Ascending aorta (tissue), 2 donors: ENCODE measurements at regions of chr16 and their contacts with region 1.

Region 1: DNA sequence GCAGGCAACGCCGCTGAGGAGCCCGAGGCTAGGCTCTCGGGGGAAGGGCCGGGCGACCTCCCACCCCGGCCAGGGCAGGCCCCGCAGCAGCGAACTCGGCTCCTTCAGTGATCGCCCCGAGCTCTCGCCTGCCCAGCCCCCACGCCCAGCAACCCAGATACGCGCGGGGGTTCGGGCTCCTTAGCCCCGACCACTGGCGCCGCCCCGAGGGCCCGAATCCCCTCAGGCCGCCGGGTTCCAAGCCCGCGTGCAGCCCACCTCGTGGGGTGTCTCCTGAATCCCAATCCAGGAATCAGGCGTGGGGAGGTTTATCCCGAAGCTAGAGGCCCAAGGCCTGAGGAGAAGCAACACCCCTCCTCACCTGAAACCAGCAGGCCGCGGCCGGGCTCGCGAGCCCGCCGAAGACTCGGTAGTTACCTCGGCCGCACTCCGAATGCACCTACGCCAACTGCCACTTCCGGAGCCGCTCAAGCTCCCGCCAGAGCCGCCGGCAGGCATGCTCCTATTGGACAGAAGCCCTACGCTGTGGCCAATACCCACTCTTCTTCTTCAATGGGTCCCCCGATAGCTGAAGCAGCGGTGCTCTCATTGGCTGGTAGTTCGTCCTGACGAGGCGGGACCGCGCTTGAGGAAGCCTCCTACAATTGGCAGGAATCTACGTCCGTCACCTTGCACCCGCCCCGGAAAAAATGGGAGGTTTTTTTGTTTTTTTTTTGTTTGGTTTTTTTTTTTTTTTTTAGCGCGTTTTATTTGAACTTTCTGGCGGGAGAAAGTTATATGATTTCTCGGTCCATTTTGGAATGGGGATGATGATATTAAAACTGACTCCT is at the start of gene RFWD3:
- DNase-seq: peak; percentile 91 to 99
- H3K4me3 ChIP-seq: peak within 1 kb of the TSS; percentile 78 to 94
- H3K27ac ChIP-seq: peak within 1 kb of the TSS; percentile 13 to 77
- H3K4me1 ChIP-seq: peaks cover 0 to 6% of the 10 kb centered on the region in 2 donors
- H3K27me3 ChIP-seq: no peaks in the 10 kb centered on the region
- CTCF ChIP-seq: no peak
- total RNA-seq, gene RFWD3: 54.6 TPM

Region 2: DNA sequence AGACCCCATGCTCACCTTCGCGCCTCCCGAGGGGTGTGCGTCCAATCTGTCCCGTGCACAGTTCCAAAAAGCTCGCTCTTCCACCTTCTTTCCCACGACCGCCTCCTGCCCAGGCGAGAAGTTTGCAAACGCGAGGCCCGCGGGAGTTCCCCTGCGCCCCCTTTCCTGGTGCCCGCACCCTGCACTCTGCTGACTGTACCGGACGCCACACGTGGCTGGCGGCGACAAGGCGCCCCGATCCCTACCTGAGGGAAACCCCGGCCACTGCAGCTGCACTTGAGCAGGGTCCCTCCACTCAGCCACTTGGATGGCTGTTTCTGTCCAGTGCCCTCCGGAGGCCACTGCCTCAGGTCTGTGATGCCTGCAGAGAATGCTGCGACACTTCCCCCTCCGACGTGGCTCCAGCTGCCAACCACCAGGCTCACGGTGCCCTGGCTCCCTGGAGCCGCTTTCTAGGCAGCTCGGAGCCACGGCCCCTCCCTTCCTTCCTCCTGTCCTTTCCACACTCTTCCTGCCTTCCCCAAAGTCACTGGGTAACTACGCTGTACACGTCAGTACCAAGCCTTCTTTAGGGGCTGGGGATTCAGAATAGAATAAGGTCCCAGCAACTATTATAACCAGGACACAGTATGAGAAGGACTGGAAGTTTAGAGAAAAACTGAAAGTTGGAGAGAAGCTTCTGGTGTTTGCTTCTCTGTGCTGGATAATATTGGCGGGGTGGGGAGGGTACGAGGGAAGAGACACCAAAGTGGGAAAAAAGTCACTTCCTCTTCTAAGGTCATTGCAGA is 34.0 kb after region 1 on chr16 and contains the start of gene MLKL:
- intact Hi-C with region 1: loop called (anchors 2 kb)
- DNase-seq: peak in 1 of 2 donors; percentile 86
- H3K4me3 ChIP-seq: peak within 1 kb of the TSS; percentile 70 to 93
- H3K27ac ChIP-seq: peak within 1 kb of the TSS; percentile 87 to 90
- H3K4me1 ChIP-seq: peaks cover 0 to 4% of the 10 kb centered on the region in 2 donors
- H3K27me3 ChIP-seq: no peaks in the 10 kb centered on the region
- CTCF ChIP-seq: peak in 1 of 3 experiments; percentile 20
- total RNA-seq, gene MLKL: 4.0 TPM